ENCODE measurements at regions of chr20 and their contacts with region 1.

Region 1: GRCh38 chr20:37564388-37565133 is 36.9 kb upstream of the BLCAP start:
- DNase-seq: peak; percentile 90
- H3K4me3 ChIP-seq: peak overlapping the region in 1 of 2 experiments; percentile 29; a peak in 1 of 4 replicates
- H3K27ac ChIP-seq: no peak overlapping the region
- H3K4me1 ChIP-seq: peaks cover 0 to 3% of the 10 kb centered on the region in 2 experiments; a peak in 1 of 4 replicates
- H3K27me3 ChIP-seq: peaks cover 13% of the 10 kb centered on the region
- CTCF ChIP-seq: peak; percentile 91
- EP300 ChIP-seq: no peak
- RAD21 ChIP-seq: peak; percentile 95

Region 2: GRCh38 chr20:37584238-37584807 is 19.8 kb after region 1 on chr20:
- CTCF ChIA-PET with region 1: interaction called, 10 read pairs
- POLR2A ChIA-PET with region 1: no interaction called
- DNase-seq: no peak
- H3K4me3 ChIP-seq: no peak overlapping the region
- H3K27ac ChIP-seq: no peak overlapping the region
- H3K4me1 ChIP-seq: no peaks in the 10 kb centered on the region
- H3K27me3 ChIP-seq: peaks cover 7% of the 10 kb centered on the region; the same call in 1 of the 2 replicates
- CTCF ChIP-seq: no peak
- EP300 ChIP-seq: no peak
- RAD21 ChIP-seq: no peak

Region 3: GRCh38 chr20:37640600-37641561 is 76.3 kb after region 1 on chr20:
- CTCF ChIA-PET with region 1: interaction called, 15 read pairs
- POLR2A ChIA-PET with region 1: no interaction called
- DNase-seq: peak; percentile 63
- H3K4me3 ChIP-seq: no peak overlapping the region
- H3K27ac ChIP-seq: peak overlapping the region in 1 of 2 experiments; percentile 62; a peak in 1 of 4 replicates
- H3K4me1 ChIP-seq: peaks cover 0 to 10% of the 10 kb centered on the region in 2 experiments; a peak in 2 of 4 replicates
- H3K27me3 ChIP-seq: 0 out of 2 replicates have a peak, but pooled peaks cover 5% of the 10 kb centered on the region
- CTCF ChIP-seq: no peak
- EP300 ChIP-seq: peak in 1 of 2 experiments; percentile 31; a peak in 2 of 4 replicates
- RAD21 ChIP-seq: no peak

Region 4: DNA sequence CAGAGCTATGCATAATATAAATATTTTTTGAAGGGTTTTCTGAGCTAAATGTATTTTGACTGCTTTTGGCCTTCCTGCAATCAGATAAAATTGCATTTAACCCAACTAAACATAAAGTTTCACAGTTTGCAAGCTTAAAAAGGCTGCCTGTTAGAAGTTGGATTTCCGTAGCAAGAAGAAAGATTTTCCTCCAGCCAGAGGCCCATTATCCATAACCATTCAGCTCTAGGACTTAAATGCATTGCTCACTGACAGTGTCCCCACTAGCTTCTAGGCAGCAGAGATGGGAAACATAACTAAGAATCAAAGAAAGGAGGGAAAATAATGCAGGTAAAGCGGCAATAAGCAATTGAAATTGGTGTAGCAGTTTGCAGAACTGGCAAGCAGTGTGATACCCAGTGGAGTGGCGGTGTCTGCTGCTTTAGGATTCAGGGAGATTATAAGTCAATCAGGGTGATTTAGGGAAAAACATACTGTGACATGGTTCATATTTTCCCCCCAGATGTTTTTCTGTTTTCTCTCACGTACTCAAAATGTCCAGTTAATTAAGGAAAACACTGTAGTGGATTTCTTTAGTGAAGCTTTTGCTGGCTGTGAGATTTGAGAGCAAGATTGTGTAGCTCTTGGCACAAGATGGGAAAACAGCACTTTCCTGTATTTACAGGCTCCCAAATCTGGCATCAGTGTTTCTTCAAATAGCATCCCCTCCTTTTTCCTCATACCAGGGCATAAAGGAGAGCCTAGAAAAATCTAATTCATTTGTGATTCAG is 198.3 kb after region 1 on chr20:
- CTCF ChIA-PET with region 1: interaction called, 15 read pairs
- POLR2A ChIA-PET with region 1: no interaction called
- DNase-seq: peak; percentile 34
- H3K4me3 ChIP-seq: no peak overlapping the region
- H3K27ac ChIP-seq: no peak overlapping the region
- H3K4me1 ChIP-seq: peaks cover 0 to 7% of the 10 kb centered on the region in 2 experiments; a peak in 2 of 4 replicates
- H3K27me3 ChIP-seq: no peaks in the 10 kb centered on the region
- CTCF ChIP-seq: no peak
- EP300 ChIP-seq: peak in 1 of 2 experiments; percentile 32; a peak in 1 of 4 replicates
- RAD21 ChIP-seq: no peak

Region 5: GRCh38 chr20:37901654-37902503 is 337.3 kb after region 1 on chr20:
- CTCF ChIA-PET with region 1: interaction called, 43 read pairs
- POLR2A ChIA-PET with region 1: no interaction called
- DNase-seq: peak; percentile 86
- H3K4me3 ChIP-seq: peak overlapping the region; percentile 57 to 60
- H3K27ac ChIP-seq: no peak overlapping the region
- H3K4me1 ChIP-seq: peaks cover 12 to 25% of the 10 kb centered on the region in 2 experiments; a peak in 2 of 4 replicates
- H3K27me3 ChIP-seq: no peaks in the 10 kb centered on the region
- CTCF ChIP-seq: peak; percentile 63
- EP300 ChIP-seq: no peak
- RAD21 ChIP-seq: peak; percentile 83

Region 6: DNA sequence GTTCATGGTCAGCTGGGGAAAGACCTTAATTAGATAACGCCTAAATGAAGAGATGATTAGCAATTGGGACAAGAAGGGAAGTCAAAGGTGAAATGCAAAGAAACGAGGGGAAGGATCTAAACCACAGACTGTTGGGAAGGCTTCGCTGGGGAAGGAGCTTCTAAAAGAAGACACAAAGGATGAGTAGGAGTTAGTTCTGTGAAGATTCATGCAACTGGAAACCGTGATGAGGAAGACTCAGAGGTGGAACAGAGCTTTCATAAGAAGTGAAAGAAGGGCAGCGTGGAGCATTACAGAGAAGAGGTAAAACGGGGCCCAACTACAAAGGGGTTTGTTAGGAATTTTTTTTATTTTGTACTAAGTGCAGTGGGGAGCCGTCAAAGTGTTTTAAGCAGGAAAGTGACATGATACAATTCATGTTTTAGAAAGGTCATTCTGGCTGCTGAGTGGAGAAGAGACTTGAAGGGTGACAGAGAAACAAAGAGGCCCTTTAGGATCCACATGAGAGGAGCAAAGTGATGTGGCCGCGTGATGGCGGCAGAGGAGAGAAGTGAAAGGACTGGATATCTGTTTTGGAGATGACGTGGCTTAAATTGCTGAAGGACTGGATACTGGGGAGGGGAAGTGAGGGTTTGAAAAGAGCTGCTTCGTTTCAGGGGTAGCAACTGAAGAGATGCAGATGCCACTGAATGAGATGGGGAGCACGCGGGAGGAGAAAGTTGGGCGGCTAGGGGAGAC is 435.1 kb after region 1 on chr20:
- CTCF ChIA-PET with region 1: interaction called, 65 read pairs
- POLR2A ChIA-PET with region 1: no interaction called
- DNase-seq: no peak
- H3K4me3 ChIP-seq: no peak overlapping the region
- H3K27ac ChIP-seq: no peak overlapping the region
- H3K4me1 ChIP-seq: peaks cover 7 to 18% of the 10 kb centered on the region in 2 experiments; a peak in 3 of 4 replicates
- H3K27me3 ChIP-seq: no peaks in the 10 kb centered on the region
- CTCF ChIP-seq: no peak
- EP300 ChIP-seq: no peak
- RAD21 ChIP-seq: no peak

Region 7: DNA sequence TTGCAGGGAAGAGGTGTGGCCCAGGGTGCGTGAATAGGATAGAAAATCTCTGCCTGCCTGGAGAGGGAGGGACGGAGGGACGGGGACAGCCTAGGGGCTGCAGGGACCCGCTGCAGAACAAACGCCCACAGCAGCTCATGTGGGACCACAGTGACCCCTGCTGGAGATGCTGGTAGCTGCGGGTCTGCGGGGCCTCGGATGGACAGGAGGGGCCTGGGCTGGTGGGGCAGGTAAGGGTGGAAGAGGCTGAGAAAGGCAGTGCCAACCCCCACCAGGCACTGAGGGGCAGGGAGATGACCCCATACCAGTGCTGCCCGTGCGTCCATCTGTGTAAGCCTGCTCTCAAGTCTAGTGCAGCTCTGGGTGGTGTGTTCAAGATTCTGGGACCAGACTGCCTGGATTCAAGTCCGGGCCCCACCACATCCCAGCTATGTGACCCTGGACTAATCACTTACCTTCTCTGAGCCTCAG is 656.6 kb after region 1 on chr20:
- CTCF ChIA-PET with region 1: interaction called, 51 read pairs
- POLR2A ChIA-PET with region 1: no interaction called
- DNase-seq: peak; percentile 94
- H3K4me3 ChIP-seq: peak overlapping the region in 1 of 2 experiments; percentile 3; a peak in 2 of 4 replicates
- H3K27ac ChIP-seq: no peak overlapping the region
- H3K4me1 ChIP-seq: peaks cover 24 to 25% of the 10 kb centered on the region in 2 experiments; a peak in 3 of 4 replicates
- H3K27me3 ChIP-seq: no peaks in the 10 kb centered on the region
- CTCF ChIP-seq: peak; percentile 97
- EP300 ChIP-seq: no peak
- RAD21 ChIP-seq: peak; percentile 95

Measured in SK-N-SH (cell line).